GM12878 (cell line): ENCODE measurements at regions of chr20 and their contacts with region 1.

Region 1: GRCh38 chr20:50120897-50121693 is 8.1 kb upstream of the UBE2V1 start:
- DNase-seq: no peak
- ATAC-seq: peak; percentile 88
- H3K4me3 ChIP-seq: no peak overlapping the region
- H3K27ac ChIP-seq: no peak overlapping the region
- H3K4me1 ChIP-seq: peaks cover 4% of the 10 kb centered on the region
- H3K27me3 ChIP-seq: no peaks in the 10 kb centered on the region
- CTCF ChIP-seq: peak; percentile 74 to 89 (median 87)
- EP300 ChIP-seq: no peak
- POLR2A ChIP-seq: peak; percentile 40; the same call in 1 of the 2 replicates
- RAD21 ChIP-seq: peak; percentile 79

Region 2: GRCh38 chr20:50133474-50134217 is 12.6 kb after region 1 on chr20:
- CTCF ChIA-PET with region 1: interaction called, 14 read pairs
- POLR2A ChIA-PET with region 1: no interaction called
- RAD21 ChIA-PET with region 1: interaction called, 3 read pairs
- SMC1A ChIA-PET with region 1: interaction called, 5 read pairs
- in situ Hi-C with region 1: no loop called
- intact Hi-C with region 1: no loop called
- DNase-seq: no peak
- ATAC-seq: peak; percentile 30; the same call in 1 of the 3 replicates
- H3K4me3 ChIP-seq: no peak overlapping the region
- H3K27ac ChIP-seq: no peak overlapping the region
- H3K4me1 ChIP-seq: no peaks in the 10 kb centered on the region
- H3K27me3 ChIP-seq: no peaks in the 10 kb centered on the region
- CTCF ChIP-seq: peak in 2 of 3 experiments; percentile 23 to 24; a peak in 2 of 6 replicates
- EP300 ChIP-seq: no peak
- POLR2A ChIP-seq: no peak
- RAD21 ChIP-seq: no peak

Region 3: GRCh38 chr20:50179507-50180016 is 58.5 kb after region 1 on chr20:
- CTCF ChIA-PET with region 1: interaction called, 22 read pairs
- POLR2A ChIA-PET with region 1: interaction called, 3 read pairs
- RAD21 ChIA-PET with region 1: interaction called, 14 read pairs
- SMC1A ChIA-PET with region 1: interaction called, 5 read pairs
- in situ Hi-C with region 1: no loop called
- intact Hi-C with region 1: loop called (anchors 2 kb)
- DNase-seq: no peak
- ATAC-seq: peak; percentile 44
- H3K4me3 ChIP-seq: no peak overlapping the region
- H3K27ac ChIP-seq: no peak overlapping the region
- H3K4me1 ChIP-seq: no peaks in the 10 kb centered on the region
- H3K27me3 ChIP-seq: no peaks in the 10 kb centered on the region
- CTCF ChIP-seq: no peak
- EP300 ChIP-seq: no peak
- POLR2A ChIP-seq: no peak
- RAD21 ChIP-seq: no peak